Dendritic cell treated with granulocyte-macrophage colony-stimulating factor and Interleukin-4, amounts not matched to agents 40 ng/mL and 50 ng/mL, for 4 days (primary cell): ENCODE measurements at regions of chr9 and their contacts with region 1.

Region 1: DNA sequence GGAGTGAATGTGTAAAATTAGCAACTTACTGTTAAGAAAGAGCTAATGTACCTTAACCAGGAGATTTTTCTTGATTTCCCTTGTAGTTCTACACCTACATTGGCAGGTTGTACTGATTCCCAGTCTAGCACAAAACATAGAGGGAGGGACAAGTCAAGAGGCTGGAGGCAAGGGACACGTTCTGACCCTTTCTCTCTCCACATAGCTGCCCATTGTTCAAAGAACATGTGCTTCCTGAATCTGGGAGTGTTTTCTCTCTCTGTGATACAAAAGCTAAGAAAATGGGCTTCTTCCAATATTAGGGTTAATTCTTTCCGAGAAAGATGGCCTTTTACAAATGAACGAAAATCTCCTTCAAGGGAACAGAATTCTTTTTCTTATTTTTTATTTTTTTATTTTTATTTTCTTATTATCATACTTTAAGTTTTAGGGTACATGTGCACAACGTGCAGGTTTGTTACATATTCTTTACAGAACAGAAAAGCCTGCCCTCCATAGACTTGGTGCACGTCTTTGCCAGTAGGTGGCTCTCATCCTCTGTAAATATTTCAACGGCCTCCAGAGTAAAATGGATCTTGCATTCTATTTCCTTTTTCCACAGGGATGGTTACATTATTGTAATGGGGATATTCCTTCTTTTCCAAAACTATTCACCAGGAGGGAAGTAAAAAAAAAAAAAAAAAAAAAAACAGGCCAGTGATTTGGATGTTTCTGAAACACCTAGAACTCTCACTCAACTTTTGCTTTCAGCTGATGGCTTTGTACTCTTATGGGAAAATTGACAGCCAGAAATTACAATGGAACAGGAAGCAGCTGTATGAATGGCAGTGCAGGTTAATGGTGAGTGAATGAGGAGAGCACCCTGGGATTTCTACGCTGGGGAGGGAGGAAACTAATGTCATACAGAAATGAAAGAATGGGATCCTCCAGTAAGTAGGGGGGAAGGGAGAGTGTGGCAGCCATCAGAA is 13.1 kb upstream of the IFNA5 start:
- H3K4me3 Mint-ChIP-seq: no peak overlapping the region
- H3K27ac Mint-ChIP-seq: no peak overlapping the region
- H3K4me1 Mint-ChIP-seq: peaks cover 9% of the 10 kb centered on the region
- H3K27me3 Mint-ChIP-seq: peaks cover 14% of the 10 kb centered on the region

Region 2: DNA sequence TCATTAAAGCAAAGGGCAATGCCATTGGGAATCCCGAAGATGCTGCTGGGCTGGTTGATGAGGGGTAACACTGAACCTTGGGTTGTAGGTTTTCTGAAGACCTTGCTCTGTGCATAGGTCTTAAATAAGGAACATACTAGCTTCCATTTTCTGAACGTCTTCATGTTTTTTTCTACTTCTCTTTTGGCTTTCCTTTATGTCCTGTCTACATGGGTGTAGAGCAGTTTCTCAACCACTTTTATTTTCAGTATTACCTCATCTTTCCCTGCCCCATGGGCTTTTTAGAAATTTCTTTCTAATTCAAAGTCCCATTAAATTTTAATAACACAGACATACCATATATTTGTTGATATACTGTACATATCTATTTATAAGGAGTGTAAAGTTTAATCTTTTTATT is 78.3 kb before region 1 on chr9 and contains the start of gene IFNA14:
- intact Hi-C with region 1: loop called (anchors 5 kb)
- H3K4me3 Mint-ChIP-seq: no peak within 1 kb of the TSS
- H3K27ac Mint-ChIP-seq: no peak within 1 kb of the TSS
- H3K4me1 Mint-ChIP-seq: peaks cover 18% of the 10 kb centered on the region
- H3K27me3 Mint-ChIP-seq: peaks cover 54% of the 10 kb centered on the region

Region 3: DNA sequence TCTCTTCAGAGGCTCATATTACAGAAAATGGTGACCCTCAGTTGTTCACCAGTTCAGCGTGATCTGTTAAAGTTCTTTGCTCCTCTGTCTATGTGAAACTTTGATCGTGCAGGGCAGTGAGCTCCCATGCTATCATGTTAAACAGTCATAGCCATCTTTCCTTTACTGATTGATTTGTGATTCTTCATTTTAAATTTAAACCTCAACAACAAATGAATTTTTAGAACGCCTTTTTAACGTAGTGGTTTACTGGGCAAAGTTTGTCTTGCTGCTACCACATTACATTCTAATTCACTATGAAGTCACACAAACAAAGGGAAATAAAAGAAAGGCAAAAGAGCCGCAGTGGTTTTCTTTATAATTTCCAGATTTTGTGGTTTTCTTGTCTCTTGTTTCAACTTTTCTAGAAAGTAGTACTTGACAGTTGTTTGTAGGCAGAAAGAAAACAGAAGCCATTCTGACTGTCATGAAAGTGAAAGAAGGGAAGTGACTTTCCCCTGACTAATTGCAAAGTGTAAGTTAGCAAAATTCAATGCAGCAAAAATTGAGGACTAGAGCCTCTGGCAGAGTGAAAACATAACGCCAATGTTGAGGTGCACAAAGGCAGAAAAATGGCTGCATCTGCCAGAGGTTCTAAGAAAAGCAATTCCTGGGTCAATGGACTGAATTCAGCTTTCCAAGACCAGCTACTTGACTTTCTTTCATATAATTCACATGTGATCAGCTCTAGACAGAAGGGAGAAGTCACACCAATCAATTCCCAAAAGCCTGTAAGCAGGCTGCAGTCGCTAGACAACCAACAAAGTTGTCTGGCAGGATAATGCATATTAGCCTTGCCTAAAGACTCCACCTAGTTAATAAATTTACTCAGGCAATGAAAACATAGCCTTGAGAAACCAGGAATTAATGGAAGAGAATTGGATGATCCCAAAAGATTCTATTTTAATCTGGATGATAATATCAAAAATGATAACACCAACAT is 39.5 kb after region 1 on chr9:
- intact Hi-C with region 1: no loop called
- H3K4me3 Mint-ChIP-seq: no peak overlapping the region
- H3K27ac Mint-ChIP-seq: no peak overlapping the region
- H3K4me1 Mint-ChIP-seq: peaks cover 13% of the 10 kb centered on the region
- H3K27me3 Mint-ChIP-seq: peaks cover 29% of the 10 kb centered on the region